HCT116 (cell line): ENCODE measurements at regions of chr1 and their contacts with region 1.

Region 1: GRCh38 chr1:173429471-173430402 is 47.4 kb upstream of the PRDX6 start:
- DNase-seq: peak; percentile 40
- ATAC-seq: peak; percentile 91
- H3K4me3 ChIP-seq: peak overlapping the region in 1 of 2 experiments; percentile 40; a peak in 3 of 4 replicates
- H3K27ac ChIP-seq: peak overlapping the region; percentile 36
- H3K4me1 ChIP-seq: peaks cover 23 to 60% of the 10 kb centered on the region in 2 experiments
- H3K27me3 ChIP-seq: no peaks in the 10 kb centered on the region
- CTCF ChIP-seq: 0 out of 6 replicates have a peak, but pooled peaks of 1 of the 3 experiments have one; percentile 8
- POLR2A ChIP-seq: no peak
- RAD21 ChIP-seq: peak; percentile 7; the same call in 1 of the 2 replicates

Region 2: GRCh38 chr1:172561252-172561651 is 868.5 kb before region 1 on chr1:
- CTCF ChIA-PET with region 1: no interaction called
- POLR2A ChIA-PET with region 1: no interaction called
- RAD21 ChIA-PET with region 1: no interaction called
- intact Hi-C with region 1: no loop called
- DNase-seq: no peak
- ATAC-seq: no peak
- H3K4me3 ChIP-seq: no peak overlapping the region
- H3K27ac ChIP-seq: no peak overlapping the region
- H3K4me1 ChIP-seq: no peaks in the 10 kb centered on the region
- H3K27me3 ChIP-seq: no peaks in the 10 kb centered on the region
- CTCF ChIP-seq: no peak
- POLR2A ChIP-seq: no peak
- RAD21 ChIP-seq: no peak

Region 3: DNA sequence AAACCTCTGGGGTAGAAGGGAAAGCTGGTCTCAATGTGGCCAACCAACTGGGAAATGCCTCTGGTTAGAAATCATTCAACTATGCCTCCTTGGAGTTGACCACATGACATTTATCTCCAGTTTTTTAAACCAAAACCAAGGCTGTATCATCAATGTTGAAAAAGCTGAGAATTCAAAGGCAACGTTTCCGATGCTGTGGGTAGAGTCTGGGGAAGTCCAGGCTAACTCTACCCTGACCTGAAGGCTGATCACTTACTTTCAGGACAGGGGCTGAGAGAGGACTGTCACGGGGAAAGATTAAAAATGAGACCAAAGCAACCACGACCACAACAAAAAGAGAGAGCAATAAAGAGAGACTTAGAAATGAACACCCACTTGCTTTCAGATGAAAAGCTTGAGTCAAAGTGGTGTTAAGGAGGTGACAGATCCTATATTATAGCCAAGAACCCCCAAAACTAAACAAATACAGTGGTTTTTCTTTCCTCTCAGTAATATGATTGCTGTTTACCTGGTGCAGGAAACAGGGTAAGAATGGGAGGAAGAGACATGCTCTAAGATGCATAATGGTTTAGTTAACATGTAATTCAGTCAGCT is 131.8 kb before region 1 on chr1:
- CTCF ChIA-PET with region 1: no interaction called
- POLR2A ChIA-PET with region 1: no interaction called
- RAD21 ChIA-PET with region 1: no interaction called
- intact Hi-C with region 1: no loop called
- DNase-seq: no peak
- ATAC-seq: no peak
- H3K4me3 ChIP-seq: no peak overlapping the region
- H3K27ac ChIP-seq: no peak overlapping the region
- H3K4me1 ChIP-seq: no peaks in the 10 kb centered on the region
- H3K27me3 ChIP-seq: no peaks in the 10 kb centered on the region
- CTCF ChIP-seq: no peak
- POLR2A ChIP-seq: no peak
- RAD21 ChIP-seq: no peak

Region 4: GRCh38 chr1:173688300-173688699 is 258.6 kb after region 1 on chr1:
- CTCF ChIA-PET with region 1: no interaction called
- POLR2A ChIA-PET with region 1: no interaction called
- RAD21 ChIA-PET with region 1: no interaction called
- intact Hi-C with region 1: loop called (anchors 1 kb)
- DNase-seq: no peak
- ATAC-seq: no peak
- H3K4me3 ChIP-seq: no peak overlapping the region
- H3K27ac ChIP-seq: no peak overlapping the region
- H3K4me1 ChIP-seq: no peaks in the 10 kb centered on the region
- H3K27me3 ChIP-seq: no peaks in the 10 kb centered on the region
- CTCF ChIP-seq: no peak
- POLR2A ChIP-seq: no peak
- RAD21 ChIP-seq: no peak

Region 5: GRCh38 chr1:173861731-173862145 is 432.0 kb after region 1 on chr1:
- CTCF ChIA-PET with region 1: no interaction called
- POLR2A ChIA-PET with region 1: interaction called, 7 read pairs
- RAD21 ChIA-PET with region 1: no interaction called
- intact Hi-C with region 1: loop called (anchors 2 kb)
- DNase-seq: no peak
- ATAC-seq: peak; percentile 43
- H3K4me3 ChIP-seq: no peak overlapping the region
- H3K27ac ChIP-seq: no peak overlapping the region
- H3K4me1 ChIP-seq: peaks cover 5 to 32% of the 10 kb centered on the region in 2 experiments; a peak in 3 of 4 replicates
- H3K27me3 ChIP-seq: no peaks in the 10 kb centered on the region
- CTCF ChIP-seq: no peak
- POLR2A ChIP-seq: no peak
- RAD21 ChIP-seq: no peak

Region 6: GRCh38 chr1:174217787-174218574 is 788.2 kb after region 1 on chr1:
- CTCF ChIA-PET with region 1: interaction called, 10 read pairs
- POLR2A ChIA-PET with region 1: no interaction called
- RAD21 ChIA-PET with region 1: no interaction called
- intact Hi-C with region 1: no loop called
- DNase-seq: peak; percentile 21
- ATAC-seq: peak; percentile 76; the same call in 1 of the 2 replicates
- H3K4me3 ChIP-seq: no peak overlapping the region
- H3K27ac ChIP-seq: no peak overlapping the region
- H3K4me1 ChIP-seq: peaks cover 0 to 6% of the 10 kb centered on the region in 2 experiments; a peak in 1 of 4 replicates
- H3K27me3 ChIP-seq: no peaks in the 10 kb centered on the region
- CTCF ChIP-seq: peak; percentile 58 to 85 (median 66); a peak in 5 of 6 replicates
- POLR2A ChIP-seq: no peak
- RAD21 ChIP-seq: peak; percentile 83